ENCODE measurements at regions of chr10 and their contacts with region 1.

Region 1: GRCh38 chr10:124688889-124689670 is 55.1 kb downstream of the FAM53B start:
- DNase-seq: peak; percentile 87
- H3K4me3 Mint-ChIP-seq: peak overlapping the region; percentile 44
- H3K27ac Mint-ChIP-seq: peak overlapping the region; percentile 92
- H3K4me1 Mint-ChIP-seq: peaks cover 87% of the 10 kb centered on the region
- H3K27me3 Mint-ChIP-seq: no peaks in the 10 kb centered on the region

Region 2: GRCh38 chr10:124641282-124642087 is 47.6 kb before region 1 on chr10:
- CTCF ChIA-PET with region 1: interaction called, 5 read pairs
- POLR2A ChIA-PET with region 1: interaction called, 4 read pairs
- intact Hi-C with region 1: loop called (anchors 2 kb)
- DNase-seq: peak; percentile 76
- H3K4me3 Mint-ChIP-seq: peak overlapping the region; percentile 54
- H3K27ac Mint-ChIP-seq: peak overlapping the region; percentile 94
- H3K4me1 Mint-ChIP-seq: peaks cover 78% of the 10 kb centered on the region
- H3K27me3 Mint-ChIP-seq: no peaks in the 10 kb centered on the region

Region 3: GRCh38 chr10:124671486-124672075 is 17.5 kb before region 1 on chr10:
- CTCF ChIA-PET with region 1: interaction called, 12 read pairs
- POLR2A ChIA-PET with region 1: interaction called, 8 read pairs
- intact Hi-C with region 1: no loop called
- DNase-seq: peak; percentile 48
- H3K4me3 Mint-ChIP-seq: no peak overlapping the region
- H3K27ac Mint-ChIP-seq: peak overlapping the region; percentile 83
- H3K4me1 Mint-ChIP-seq: peaks cover 89% of the 10 kb centered on the region
- H3K27me3 Mint-ChIP-seq: no peaks in the 10 kb centered on the region

Region 4: GRCh38 chr10:124703778-124704427 is 14.8 kb after region 1 on chr10:
- CTCF ChIA-PET with region 1: interaction called, 16 read pairs
- POLR2A ChIA-PET with region 1: interaction called, 23 read pairs
- intact Hi-C with region 1: loop called (anchors 1 kb)
- DNase-seq: no peak
- H3K4me3 Mint-ChIP-seq: no peak overlapping the region
- H3K27ac Mint-ChIP-seq: peak overlapping the region; percentile 95
- H3K4me1 Mint-ChIP-seq: peaks cover 99% of the 10 kb centered on the region
- H3K27me3 Mint-ChIP-seq: no peaks in the 10 kb centered on the region

Region 5: GRCh38 chr10:124916585-124917427 is 227.7 kb after region 1 on chr10:
- CTCF ChIA-PET with region 1: no interaction called
- POLR2A ChIA-PET with region 1: no interaction called
- intact Hi-C with region 1: no loop called
- DNase-seq: peak; percentile 97
- H3K4me3 Mint-ChIP-seq: peak overlapping the region; percentile 87
- H3K27ac Mint-ChIP-seq: peak overlapping the region; percentile 81
- H3K4me1 Mint-ChIP-seq: peaks cover 30% of the 10 kb centered on the region
- H3K27me3 Mint-ChIP-seq: no peaks in the 10 kb centered on the region

Region 6: GRCh38 chr10:124971276-124971675 is 282.2 kb after region 1 on chr10:
- CTCF ChIA-PET with region 1: no interaction called
- POLR2A ChIA-PET with region 1: no interaction called
- intact Hi-C with region 1: no loop called
- DNase-seq: no peak
- H3K4me3 Mint-ChIP-seq: no peak overlapping the region
- H3K27ac Mint-ChIP-seq: no peak overlapping the region
- H3K4me1 Mint-ChIP-seq: peaks cover 16% of the 10 kb centered on the region
- H3K27me3 Mint-ChIP-seq: no peaks in the 10 kb centered on the region

Measured in activated CD4-positive, alpha-beta memory T cell treated with anti-CD3 and anti-CD28 coated beads for 36 hours (primary cell).